Endothelial cell of umbilical vein (primary cell): ENCODE measurements at regions of chr9 and their contacts with region 1.

Region 1: DNA sequence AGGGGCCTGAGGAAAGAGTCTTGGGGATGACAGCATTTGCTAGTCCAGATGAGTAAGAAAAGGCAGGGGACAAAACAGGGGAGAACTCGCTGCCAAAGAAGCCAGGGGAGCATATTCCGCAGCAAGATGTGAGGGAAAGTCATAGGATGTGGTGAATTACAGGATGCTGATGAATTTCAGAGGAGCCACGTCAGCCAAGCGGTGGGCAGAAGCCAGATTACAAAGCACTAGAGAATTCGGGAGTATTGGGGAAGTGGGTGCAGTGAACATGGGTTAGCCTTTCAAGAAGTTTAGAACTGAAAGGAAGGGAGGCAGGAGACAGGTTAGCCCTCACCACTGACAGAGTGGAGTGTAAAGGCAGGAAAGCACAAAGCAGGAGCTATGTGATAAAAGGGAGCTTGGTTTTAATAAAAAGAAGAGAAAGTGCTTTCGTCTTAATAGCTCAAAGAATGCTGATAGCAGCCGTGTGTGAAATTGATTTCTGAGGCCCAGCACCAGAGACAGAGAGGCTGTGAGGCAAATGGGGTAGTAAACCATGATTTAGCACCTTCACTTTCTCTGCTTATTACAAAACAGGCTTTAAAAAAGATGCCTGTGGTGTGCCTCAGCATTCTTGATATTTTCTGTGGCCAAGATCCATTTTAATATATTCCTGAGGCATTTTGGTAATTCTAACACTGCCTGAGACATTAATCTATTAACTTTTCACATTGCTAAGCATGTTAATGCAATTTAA is 16.9 kb downstream of the ADAMTSL1 start:
- DNase-seq: peak; percentile 96
- H3K4me3 ChIP-seq: peak overlapping the region in 2 of 3 experiments; percentile 8 to 25
- H3K27ac ChIP-seq: peak overlapping the region; percentile 96
- H3K4me1 ChIP-seq: peaks cover 50% of the 10 kb centered on the region
- H3K27me3 ChIP-seq: no peaks in the 10 kb centered on the region
- CTCF ChIP-seq: no peak
- POLR2A ChIP-seq: peak; percentile 31

Region 2: GRCh38 chr9:18314316-18314715 is 176.5 kb before region 1 on chr9:
- CTCF ChIA-PET with region 1: no interaction called
- POLR2A ChIA-PET with region 1: no interaction called
- dilution Hi-C with region 1: no loop called
- intact Hi-C with region 1: loop called (anchors 1 kb)
- DNase-seq: peak; percentile 50
- H3K4me3 ChIP-seq: no peak overlapping the region
- H3K27ac ChIP-seq: peak overlapping the region; percentile 18
- H3K4me1 ChIP-seq: no peaks in the 10 kb centered on the region
- H3K27me3 ChIP-seq: no peaks in the 10 kb centered on the region
- CTCF ChIP-seq: no peak
- POLR2A ChIP-seq: peak; percentile 21

Region 3: DNA sequence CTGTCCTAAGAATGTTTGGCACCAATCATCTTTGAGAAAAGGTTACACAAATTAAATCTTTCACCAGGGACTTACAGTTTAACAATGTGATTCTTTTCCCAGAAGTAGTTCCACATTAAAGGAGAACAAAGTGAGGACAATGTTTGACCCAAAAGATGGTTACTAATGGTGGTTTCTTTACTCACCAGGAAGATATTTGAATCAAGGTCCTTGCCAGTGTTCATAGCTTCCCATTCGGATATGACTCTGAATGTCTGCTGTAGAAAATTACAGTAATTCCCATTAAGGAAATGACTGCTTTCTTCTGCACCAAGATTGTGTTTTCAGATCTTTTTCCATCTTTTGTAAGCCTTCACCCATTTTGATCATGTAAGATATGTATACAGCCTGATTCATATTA is 131.5 kb before region 1 on chr9:
- CTCF ChIA-PET with region 1: no interaction called
- POLR2A ChIA-PET with region 1: no interaction called
- dilution Hi-C with region 1: no loop called
- intact Hi-C with region 1: no loop called
- DNase-seq: peak; percentile 92
- H3K4me3 ChIP-seq: peak overlapping the region in 1 of 3 experiments; percentile 59
- H3K27ac ChIP-seq: peak overlapping the region; percentile 100
- H3K4me1 ChIP-seq: peaks cover 31% of the 10 kb centered on the region
- H3K27me3 ChIP-seq: no peaks in the 10 kb centered on the region
- CTCF ChIP-seq: no peak
- POLR2A ChIP-seq: no peak

Region 4: DNA sequence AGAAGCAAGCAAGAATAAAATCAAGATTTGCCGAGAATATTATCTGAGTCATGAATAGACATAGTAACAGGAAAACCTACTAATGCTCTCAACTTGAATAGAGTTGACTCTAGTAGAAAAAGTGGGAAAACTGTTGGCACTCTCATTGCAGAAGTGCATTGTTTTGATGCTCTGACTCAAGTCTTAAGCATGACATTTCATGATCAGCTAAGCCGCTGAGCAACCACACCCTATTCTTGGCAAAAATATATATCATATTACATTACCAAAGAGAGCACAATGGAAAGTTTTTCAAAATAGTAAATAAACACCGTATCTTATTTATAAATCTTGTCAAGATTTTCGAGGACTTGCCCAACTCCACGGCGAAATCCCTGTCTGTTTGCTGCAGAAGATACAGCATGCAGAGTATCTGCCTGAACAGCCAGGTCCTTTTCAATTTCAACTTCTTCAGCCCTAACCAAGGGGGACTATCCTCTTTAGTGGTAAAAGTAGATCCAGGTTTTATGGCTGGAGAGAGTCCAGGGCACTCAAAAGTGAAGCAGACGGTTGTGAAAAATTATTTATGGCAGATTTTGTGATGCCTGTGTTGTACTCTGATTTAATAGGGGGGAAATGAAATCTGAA is 30.7 kb before region 1 on chr9:
- CTCF ChIA-PET with region 1: interaction called, 4 read pairs
- POLR2A ChIA-PET with region 1: no interaction called
- dilution Hi-C with region 1: no loop called
- intact Hi-C with region 1: loop called (anchors 2 kb)
- DNase-seq: peak; percentile 85
- H3K4me3 ChIP-seq: no peak overlapping the region
- H3K27ac ChIP-seq: peak overlapping the region; percentile 91
- H3K4me1 ChIP-seq: peaks cover 29% of the 10 kb centered on the region
- H3K27me3 ChIP-seq: no peaks in the 10 kb centered on the region
- CTCF ChIP-seq: no peak
- POLR2A ChIP-seq: peak; percentile 55

Region 5: GRCh38 chr9:18520416-18521047 is 29.7 kb after region 1 on chr9:
- CTCF ChIA-PET with region 1: no interaction called
- POLR2A ChIA-PET with region 1: no interaction called
- dilution Hi-C with region 1: no loop called
- intact Hi-C with region 1: no loop called
- DNase-seq: no peak
- H3K4me3 ChIP-seq: no peak overlapping the region
- H3K27ac ChIP-seq: no peak overlapping the region
- H3K4me1 ChIP-seq: no peaks in the 10 kb centered on the region
- H3K27me3 ChIP-seq: no peaks in the 10 kb centered on the region
- CTCF ChIP-seq: no peak
- POLR2A ChIP-seq: no peak

Region 6: GRCh38 chr9:18596920-18597319 is 106.1 kb after region 1 on chr9:
- CTCF ChIA-PET with region 1: no interaction called
- POLR2A ChIA-PET with region 1: no interaction called
- dilution Hi-C with region 1: no loop called
- intact Hi-C with region 1: no loop called
- DNase-seq: no peak
- H3K4me3 ChIP-seq: no peak overlapping the region
- H3K27ac ChIP-seq: no peak overlapping the region
- H3K4me1 ChIP-seq: no peaks in the 10 kb centered on the region
- H3K27me3 ChIP-seq: no peaks in the 10 kb centered on the region
- CTCF ChIP-seq: no peak
- POLR2A ChIP-seq: no peak

Region 7: GRCh38 chr9:18632632-18633403 is 142.0 kb after region 1 on chr9:
- CTCF ChIA-PET with region 1: interaction called, 3 read pairs
- POLR2A ChIA-PET with region 1: no interaction called
- dilution Hi-C with region 1: no loop called
- intact Hi-C with region 1: loop called (anchors 1 kb)
- DNase-seq: peak; percentile 96
- H3K4me3 ChIP-seq: no peak overlapping the region
- H3K27ac ChIP-seq: peak overlapping the region; percentile 81
- H3K4me1 ChIP-seq: peaks cover 39% of the 10 kb centered on the region
- H3K27me3 ChIP-seq: no peaks in the 10 kb centered on the region
- CTCF ChIP-seq: no peak
- POLR2A ChIP-seq: no peak

Region 8: GRCh38 chr9:18747595-18747994 is 256.8 kb after region 1 on chr9:
- CTCF ChIA-PET with region 1: no interaction called
- POLR2A ChIA-PET with region 1: no interaction called
- dilution Hi-C with region 1: no loop called
- intact Hi-C with region 1: no loop called
- DNase-seq: no peak
- H3K4me3 ChIP-seq: no peak overlapping the region
- H3K27ac ChIP-seq: no peak overlapping the region
- H3K4me1 ChIP-seq: no peaks in the 10 kb centered on the region
- H3K27me3 ChIP-seq: no peaks in the 10 kb centered on the region
- CTCF ChIP-seq: no peak
- POLR2A ChIP-seq: no peak

Region 9: DNA sequence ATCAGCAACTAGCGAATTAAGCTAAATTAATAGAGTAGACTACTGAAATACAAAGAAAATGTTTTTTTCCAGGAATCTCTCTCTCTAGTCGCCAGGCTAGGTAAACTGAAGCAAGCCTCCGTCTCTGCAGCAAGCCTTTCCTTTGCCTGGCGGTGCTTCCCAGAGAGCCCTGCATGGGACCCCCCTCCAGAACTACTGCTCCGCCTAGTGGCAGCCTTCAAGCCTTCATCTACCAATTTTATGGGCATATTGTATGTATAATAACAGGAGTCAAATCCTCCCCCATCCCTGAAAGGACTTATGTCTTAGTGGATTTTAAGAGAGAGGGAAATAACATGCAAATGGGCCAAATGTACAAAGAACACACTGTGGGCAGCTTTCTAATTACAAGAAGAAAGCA is 300.3 kb after region 1 on chr9:
- CTCF ChIA-PET with region 1: interaction called, 3 read pairs
- POLR2A ChIA-PET with region 1: no interaction called
- dilution Hi-C with region 1: no loop called
- intact Hi-C with region 1: loop called (anchors 1 kb)
- DNase-seq: no peak
- H3K4me3 ChIP-seq: no peak overlapping the region
- H3K27ac ChIP-seq: no peak overlapping the region
- H3K4me1 ChIP-seq: peaks cover 18% of the 10 kb centered on the region
- H3K27me3 ChIP-seq: no peaks in the 10 kb centered on the region
- CTCF ChIP-seq: peak; percentile 25 to 36
- POLR2A ChIP-seq: no peak